Heart right ventricle (tissue), 16 donors: ENCODE measurements at regions of chr7 and their contacts with region 1.

Region 1: GRCh38 chr7:28179120-28180030 is 1.2 kb downstream of the JAZF1 start:
- DNase-seq: peak; percentile 79 to 83
- ATAC-seq: peak; percentile 56 to 83 (median 75)
- H3K4me3 ChIP-seq: peak overlapping the region; percentile 38 to 81 (median 71)
- H3K27ac ChIP-seq: peak overlapping the region; percentile 85 to 93 (median 89)
- H3K4me1 ChIP-seq: peaks cover 0 to 68% (median 44%) of the 10 kb centered on the region in 9 donors
- H3K27me3 ChIP-seq: no peaks in the 10 kb centered on the region
- CTCF ChIP-seq: no peak

Region 2: DNA sequence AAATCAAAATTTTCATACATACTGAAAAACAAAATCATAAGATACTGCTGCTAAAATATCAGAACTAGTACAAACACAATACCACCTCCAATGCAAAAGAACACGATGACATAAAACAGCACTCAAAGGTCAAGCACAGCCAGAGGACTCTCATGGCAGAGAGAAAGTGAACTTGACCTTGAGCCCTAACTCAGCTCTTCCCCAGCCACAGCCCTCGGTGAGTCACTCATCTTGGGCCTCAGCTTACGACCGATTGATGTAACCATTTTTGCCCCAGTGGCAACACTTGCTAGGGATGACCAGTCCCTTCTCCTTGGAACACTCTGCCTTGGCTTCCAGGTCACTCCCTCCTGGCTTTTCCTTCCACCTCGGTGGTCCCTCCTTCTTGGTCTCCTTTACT is 76.6 kb before region 1 on chr7:
- intact Hi-C with region 1: loop called in 7 of 10 experiments (anchors 5 to 10 kb)
- DNase-seq: no peak
- ATAC-seq: peak; percentile 22 to 81 (median 34)
- H3K4me3 ChIP-seq: no peak overlapping the region
- H3K27ac ChIP-seq: peak overlapping the region; percentile 37 to 93 (median 69)
- H3K4me1 ChIP-seq: peaks cover under 1 to 63% (median 52%) of the 10 kb centered on the region in 9 donors
- H3K27me3 ChIP-seq: no peaks in the 10 kb centered on the region
- CTCF ChIP-seq: no peak